Left cardiac atrium (tissue), 4 donors: ENCODE measurements at regions of chr5 and their contacts with region 1.

Region 1: GRCh38 chr5:128213340-128213739 is 129.8 kb downstream of the SLC12A2 start:
- DNase-seq: peak; percentile 34
- ATAC-seq: no peak

Region 2: DNA sequence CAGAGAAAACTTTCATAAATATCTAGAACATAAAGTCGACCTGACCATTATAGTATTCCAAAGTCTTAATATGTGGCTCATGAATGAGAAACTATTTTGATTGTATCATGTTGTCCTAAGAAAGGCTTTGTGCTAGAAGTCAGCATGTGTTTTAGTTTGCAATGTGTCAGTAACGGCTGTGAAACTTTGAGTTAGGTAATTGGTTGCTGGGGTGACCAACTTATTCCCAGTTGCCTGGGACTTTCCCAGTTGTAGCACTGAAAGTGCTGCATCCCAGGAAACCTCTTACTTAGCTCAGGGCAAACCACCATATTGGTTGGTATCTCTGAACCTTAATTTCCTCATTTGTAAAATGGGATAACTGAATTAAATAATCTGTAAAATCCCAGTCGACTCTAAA is 244.3 kb before region 1 on chr5:
- intact Hi-C with region 1: no loop called
- DNase-seq: no peak
- ATAC-seq: peak in 1 of 2 donors; percentile 67

Region 3: DNA sequence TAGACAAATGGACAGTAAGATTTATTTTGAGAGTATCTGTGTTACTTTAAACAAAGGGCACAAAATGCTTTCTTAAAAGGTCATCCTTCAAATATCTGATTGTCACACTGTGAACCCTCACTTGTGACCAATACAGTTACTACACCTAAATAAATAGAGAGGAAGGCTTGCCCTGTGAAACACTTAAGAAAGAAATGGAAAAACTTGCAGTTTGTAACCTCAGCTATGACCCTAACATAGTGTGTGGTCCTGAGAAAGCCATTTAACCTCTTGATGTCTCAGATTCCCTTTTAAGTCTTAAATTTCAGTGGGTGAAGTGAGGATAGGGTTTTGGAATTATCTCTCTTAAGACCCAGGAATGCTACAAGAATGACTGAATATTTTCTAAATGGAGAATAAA is 625.3 kb after region 1 on chr5:
- intact Hi-C with region 1: loop called in 1 of 2 experiments (anchors 5 kb)
- DNase-seq: no peak
- ATAC-seq: no peak